Sciatic nerve (tissue), 2 donors: ENCODE measurements at regions of chr22 and their contacts with region 1.

Region 1: DNA sequence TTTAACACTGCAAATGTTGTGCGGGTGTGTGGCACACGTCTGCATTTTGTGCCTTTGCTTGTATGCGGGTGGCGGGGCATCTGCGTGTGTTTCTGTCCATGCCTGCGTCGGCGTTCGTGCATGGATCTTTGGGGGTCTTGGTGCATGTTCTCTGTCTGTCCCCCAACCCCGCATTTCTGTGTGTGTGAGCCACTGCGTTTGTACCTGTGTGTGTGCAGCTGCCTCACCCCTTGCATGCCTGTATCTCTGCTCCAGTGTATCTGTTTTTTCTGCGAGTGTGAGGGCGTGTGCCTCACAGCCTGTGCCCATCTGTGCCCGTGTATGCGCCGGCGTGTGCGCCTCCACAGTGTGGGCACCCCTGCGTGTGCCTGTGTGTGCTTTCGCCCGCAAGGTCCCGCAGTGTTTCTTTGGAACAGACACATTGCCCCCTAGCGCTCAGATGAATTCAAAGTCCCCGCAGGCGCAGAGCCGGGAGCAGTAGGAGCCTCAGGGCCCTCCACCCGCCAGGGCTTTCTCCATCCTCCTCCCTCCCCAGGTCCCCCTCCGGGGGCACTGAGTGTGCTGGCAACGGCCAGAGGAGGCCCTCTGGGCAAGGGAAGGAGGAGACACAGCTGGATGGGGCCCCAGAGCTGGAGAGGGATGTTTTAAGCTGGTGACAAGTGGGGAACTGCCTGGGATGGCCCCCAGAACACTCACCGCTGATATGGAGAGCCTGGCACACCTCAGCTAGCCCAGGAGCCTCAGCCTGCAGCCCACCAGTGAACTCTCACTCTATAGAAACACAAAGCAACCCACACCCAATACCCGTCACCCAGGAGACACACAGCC is 3.1 kb upstream of the MN1 start:
- DNase-seq: peak; percentile 84
- ATAC-seq: peak; percentile 72

Region 2: DNA sequence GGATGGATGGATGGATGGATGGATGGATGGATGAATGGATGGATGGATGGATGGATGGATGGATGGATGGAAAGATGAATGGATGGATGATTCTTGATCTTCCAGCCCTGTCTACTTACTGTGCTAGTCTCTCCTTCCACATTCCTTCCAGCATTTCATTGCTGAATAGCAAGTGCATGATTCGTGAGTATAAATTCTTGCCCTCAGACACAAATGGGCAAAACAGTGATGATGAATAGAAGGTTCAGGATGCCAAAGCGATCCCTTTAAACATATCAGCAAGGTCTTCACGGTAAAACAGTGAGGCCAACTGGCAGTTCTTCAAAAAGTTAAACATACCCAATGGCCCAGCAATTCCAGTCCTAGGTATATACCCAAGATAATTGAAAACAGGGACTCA is 403.4 kb before region 1 on chr22:
- intact Hi-C with region 1: loop called (anchors 5 kb)
- DNase-seq: no peak
- ATAC-seq: no peak

Region 3: DNA sequence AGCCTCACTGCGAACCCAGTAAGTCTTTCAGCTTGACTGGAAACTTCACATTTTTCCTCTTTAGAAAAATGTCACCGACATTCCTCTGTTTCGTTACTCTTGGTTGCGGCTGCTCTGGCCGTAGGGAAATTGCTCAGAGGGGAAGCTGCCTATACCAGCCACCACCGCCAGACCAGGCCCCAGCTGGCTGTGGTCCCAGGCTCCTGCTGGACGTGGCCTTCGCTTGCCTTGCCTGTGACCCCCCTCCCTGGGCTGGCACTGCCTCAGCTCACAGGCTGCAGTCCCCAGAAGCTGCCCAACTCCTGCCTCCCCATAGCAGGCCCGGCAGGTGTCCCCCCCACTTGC is 200.9 kb before region 1 on chr22:
- intact Hi-C with region 1: loop called (anchors 10 kb)
- DNase-seq: no peak
- ATAC-seq: no peak